ENCODE measurements at regions of chr3 and their contacts with region 1.

Region 1: DNA sequence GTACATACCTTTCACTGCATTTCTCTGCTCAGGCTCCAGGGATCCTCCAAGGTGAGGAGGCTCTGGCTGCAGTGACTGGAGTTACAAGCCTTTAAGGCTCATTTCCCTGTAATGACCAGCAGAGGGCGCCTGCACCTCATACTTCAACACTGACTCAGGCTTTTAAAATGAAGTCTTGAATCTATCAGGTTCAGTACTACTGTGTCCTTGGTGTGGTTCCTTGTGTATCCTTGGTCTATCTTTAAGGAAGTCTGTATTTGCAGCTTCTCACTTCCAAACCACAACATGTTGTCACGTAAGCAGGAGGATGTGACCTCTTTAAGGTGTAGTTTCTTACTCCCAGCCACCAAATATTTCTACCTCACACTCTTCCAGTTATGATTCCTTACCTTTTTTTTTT is 122.5 kb upstream of the ZBED2 start:
- DNase-seq: peak; percentile 82
- H3K4me3 ChIP-seq: no peak overlapping the region
- H3K27ac ChIP-seq: no peak overlapping the region
- H3K4me1 ChIP-seq: no peaks in the 10 kb centered on the region
- H3K27me3 ChIP-seq: no peaks in the 10 kb centered on the region
- CTCF ChIP-seq: peak; percentile 92

Region 2: DNA sequence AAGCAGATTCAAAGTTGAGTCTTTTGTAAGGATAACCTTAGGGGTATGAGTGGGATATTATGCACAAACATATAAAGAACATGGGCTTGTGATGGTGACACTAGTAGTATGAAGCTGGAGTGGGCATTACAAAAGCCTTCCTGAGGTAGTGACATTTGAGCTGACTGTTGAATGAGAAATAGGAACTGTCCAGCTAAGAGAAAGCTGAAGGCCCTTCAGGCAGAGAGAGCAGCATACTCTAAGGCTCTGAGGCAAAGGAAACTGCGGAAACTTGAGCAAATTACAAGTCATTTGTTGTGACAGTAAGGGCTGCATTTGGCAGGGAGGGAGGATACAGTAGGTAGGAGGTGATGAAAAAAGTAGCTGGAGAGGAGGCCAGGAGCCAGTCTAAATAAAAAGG is 366.3 kb before region 1 on chr3:
- CTCF ChIA-PET with region 1: no interaction called
- POLR2A ChIA-PET with region 1: no interaction called
- intact Hi-C with region 1: no loop called
- DNase-seq: no peak
- H3K4me3 ChIP-seq: no peak overlapping the region
- H3K27ac ChIP-seq: no peak overlapping the region
- H3K4me1 ChIP-seq: no peaks in the 10 kb centered on the region
- H3K27me3 ChIP-seq: no peaks in the 10 kb centered on the region
- CTCF ChIP-seq: no peak

Region 3: GRCh38 chr3:111668912-111669488 is 48.6 kb before region 1 on chr3:
- CTCF ChIA-PET with region 1: interaction called, 18 read pairs
- POLR2A ChIA-PET with region 1: no interaction called
- intact Hi-C with region 1: loop called (anchors 1 kb)
- DNase-seq: peak; percentile 70
- H3K4me3 ChIP-seq: no peak overlapping the region
- H3K27ac ChIP-seq: no peak overlapping the region
- H3K4me1 ChIP-seq: peaks cover 4% of the 10 kb centered on the region
- H3K27me3 ChIP-seq: no peaks in the 10 kb centered on the region
- CTCF ChIP-seq: peak; percentile 80

Region 4: GRCh38 chr3:111859974-111860859 is 142.6 kb after region 1 on chr3:
- CTCF ChIA-PET with region 1: interaction called, 35 read pairs
- POLR2A ChIA-PET with region 1: no interaction called
- intact Hi-C with region 1: loop called (anchors 1 kb)
- DNase-seq: peak; percentile 95
- H3K4me3 ChIP-seq: peak overlapping the region; percentile 76
- H3K27ac ChIP-seq: peak overlapping the region; percentile 63
- H3K4me1 ChIP-seq: peaks cover 39% of the 10 kb centered on the region
- H3K27me3 ChIP-seq: no peaks in the 10 kb centered on the region
- CTCF ChIP-seq: peak; percentile 61

Region 5: DNA sequence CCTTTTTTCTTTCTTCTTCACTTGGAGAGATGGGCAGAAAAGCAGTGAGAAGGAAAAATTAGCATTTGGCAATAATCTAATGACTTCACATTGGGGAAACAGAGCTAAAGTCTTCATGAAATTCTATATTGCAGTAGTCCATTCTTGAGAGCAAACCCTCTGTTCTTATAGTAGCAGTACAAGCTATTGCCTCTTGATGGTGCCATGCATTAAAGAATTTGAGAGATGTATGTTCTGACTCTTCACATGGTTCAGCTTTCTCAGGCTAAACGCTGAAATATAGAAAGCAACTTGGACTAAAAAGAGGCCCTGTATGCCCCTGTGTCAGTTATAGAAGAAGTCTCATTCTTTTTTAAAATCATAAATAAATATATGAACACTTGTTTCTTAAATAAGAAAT is 177.5 kb after region 1 on chr3:
- CTCF ChIA-PET with region 1: interaction called, 7 read pairs
- POLR2A ChIA-PET with region 1: interaction called, 8 read pairs
- intact Hi-C with region 1: loop called (anchors 1 kb)
- DNase-seq: peak; percentile 79
- H3K4me3 ChIP-seq: no peak overlapping the region
- H3K27ac ChIP-seq: no peak overlapping the region
- H3K4me1 ChIP-seq: no peaks in the 10 kb centered on the region
- H3K27me3 ChIP-seq: no peaks in the 10 kb centered on the region
- CTCF ChIP-seq: peak; percentile 78

Region 6: GRCh38 chr3:111967651-111968274 is 250.2 kb after region 1 on chr3:
- CTCF ChIA-PET with region 1: interaction called, 29 read pairs
- POLR2A ChIA-PET with region 1: interaction called, 3 read pairs
- intact Hi-C with region 1: loop called (anchors 1 kb)
- DNase-seq: peak; percentile 83
- H3K4me3 ChIP-seq: no peak overlapping the region
- H3K27ac ChIP-seq: no peak overlapping the region
- H3K4me1 ChIP-seq: peaks cover 7% of the 10 kb centered on the region
- H3K27me3 ChIP-seq: no peaks in the 10 kb centered on the region
- CTCF ChIP-seq: peak; percentile 92

Region 7: DNA sequence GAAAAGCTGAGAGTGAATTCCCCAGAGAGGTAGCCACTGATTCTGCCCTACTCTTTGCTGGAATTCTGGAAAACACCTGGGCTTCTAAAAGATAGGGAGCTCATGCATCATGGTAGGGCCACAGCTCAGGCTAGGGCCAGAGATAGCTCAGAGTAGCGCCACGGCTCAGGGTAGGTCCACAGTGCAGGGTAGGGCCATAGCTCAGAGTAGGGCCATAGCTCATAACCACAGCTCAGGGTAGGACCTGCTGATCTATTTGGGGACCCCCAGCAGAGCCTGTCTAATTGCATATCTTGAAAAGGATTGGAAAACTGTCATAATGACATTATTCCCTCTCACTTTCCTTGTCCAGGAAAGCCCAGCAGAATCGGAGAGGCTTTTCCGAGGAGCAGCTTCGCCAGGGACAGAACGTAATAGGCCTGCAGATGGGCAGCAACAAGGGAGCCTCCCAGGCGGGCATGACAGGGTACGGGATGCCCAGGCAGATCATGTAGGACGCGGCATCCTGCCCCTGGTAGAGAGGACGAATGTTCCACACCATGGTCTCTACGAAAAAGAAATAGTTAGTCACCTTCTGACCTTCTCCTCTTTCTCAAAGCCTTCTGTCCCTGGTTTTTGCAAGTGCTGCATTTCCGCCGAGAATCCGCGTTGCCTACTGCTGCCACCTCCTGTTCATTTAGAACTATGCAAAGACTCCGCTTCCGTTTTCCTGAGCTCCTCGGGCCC is 295.6 kb after region 1 on chr3:
- CTCF ChIA-PET with region 1: interaction called, 11 read pairs
- POLR2A ChIA-PET with region 1: no interaction called
- intact Hi-C with region 1: loop called (anchors 2 kb)
- DNase-seq: peak; percentile 84
- H3K4me3 ChIP-seq: no peak overlapping the region
- H3K27ac ChIP-seq: no peak overlapping the region
- H3K4me1 ChIP-seq: peaks cover 29% of the 10 kb centered on the region
- H3K27me3 ChIP-seq: no peaks in the 10 kb centered on the region
- CTCF ChIP-seq: peak; percentile 85

Region 8: GRCh38 chr3:112043603-112044201 is 326.1 kb after region 1 on chr3:
- CTCF ChIA-PET with region 1: interaction called, 11 read pairs
- POLR2A ChIA-PET with region 1: no interaction called
- intact Hi-C with region 1: loop called (anchors 2 kb)
- DNase-seq: peak; percentile 84
- H3K4me3 ChIP-seq: no peak overlapping the region
- H3K27ac ChIP-seq: no peak overlapping the region
- H3K4me1 ChIP-seq: no peaks in the 10 kb centered on the region
- H3K27me3 ChIP-seq: no peaks in the 10 kb centered on the region
- CTCF ChIP-seq: peak; percentile 95